IMR-90 (cell line): ENCODE measurements at regions of chr2 and their contacts with region 1.

Region 1: DNA sequence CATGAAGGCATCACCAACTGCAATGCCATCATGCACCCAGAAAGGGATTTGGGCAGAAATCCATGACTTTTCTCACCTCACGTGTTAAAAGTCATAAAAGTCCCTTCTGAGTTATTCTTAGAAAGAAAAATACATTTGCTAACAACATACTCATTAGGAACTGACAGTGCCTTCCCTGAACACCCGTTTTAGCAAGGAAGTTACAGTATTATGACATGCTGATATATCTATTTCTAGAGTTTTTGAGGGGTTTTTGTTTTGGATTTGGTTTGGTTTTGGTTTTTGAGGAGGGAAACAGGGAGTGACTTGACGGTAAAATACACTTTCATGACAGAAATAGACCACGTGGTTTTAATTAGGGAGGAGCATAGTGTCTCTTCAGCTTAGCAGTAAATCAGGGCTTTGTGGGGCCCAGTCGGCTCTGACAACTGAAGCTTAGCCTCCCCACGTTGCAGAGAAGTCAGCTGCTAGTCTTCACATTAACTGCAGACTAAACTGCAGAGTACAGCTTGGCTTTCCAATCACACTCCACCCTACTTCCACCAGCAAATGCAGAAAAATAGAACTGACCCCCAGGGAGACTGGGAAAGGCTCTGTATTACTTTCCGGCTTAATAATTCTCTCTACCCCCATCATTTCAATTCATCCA is 141.4 kb downstream of the FAM124B start:
- DNase-seq: no peak
- ATAC-seq: no peak
- H3K4me3 ChIP-seq: no peak overlapping the region
- H3K27ac ChIP-seq: no peak overlapping the region
- H3K4me1 ChIP-seq: no peaks in the 10 kb centered on the region
- H3K27me3 ChIP-seq: no peaks in the 10 kb centered on the region; the same call in 1 of the 2 replicates
- CTCF ChIP-seq: no peak
- POLR2A ChIP-seq: no peak
- RAD21 ChIP-seq: no peak

Region 2: DNA sequence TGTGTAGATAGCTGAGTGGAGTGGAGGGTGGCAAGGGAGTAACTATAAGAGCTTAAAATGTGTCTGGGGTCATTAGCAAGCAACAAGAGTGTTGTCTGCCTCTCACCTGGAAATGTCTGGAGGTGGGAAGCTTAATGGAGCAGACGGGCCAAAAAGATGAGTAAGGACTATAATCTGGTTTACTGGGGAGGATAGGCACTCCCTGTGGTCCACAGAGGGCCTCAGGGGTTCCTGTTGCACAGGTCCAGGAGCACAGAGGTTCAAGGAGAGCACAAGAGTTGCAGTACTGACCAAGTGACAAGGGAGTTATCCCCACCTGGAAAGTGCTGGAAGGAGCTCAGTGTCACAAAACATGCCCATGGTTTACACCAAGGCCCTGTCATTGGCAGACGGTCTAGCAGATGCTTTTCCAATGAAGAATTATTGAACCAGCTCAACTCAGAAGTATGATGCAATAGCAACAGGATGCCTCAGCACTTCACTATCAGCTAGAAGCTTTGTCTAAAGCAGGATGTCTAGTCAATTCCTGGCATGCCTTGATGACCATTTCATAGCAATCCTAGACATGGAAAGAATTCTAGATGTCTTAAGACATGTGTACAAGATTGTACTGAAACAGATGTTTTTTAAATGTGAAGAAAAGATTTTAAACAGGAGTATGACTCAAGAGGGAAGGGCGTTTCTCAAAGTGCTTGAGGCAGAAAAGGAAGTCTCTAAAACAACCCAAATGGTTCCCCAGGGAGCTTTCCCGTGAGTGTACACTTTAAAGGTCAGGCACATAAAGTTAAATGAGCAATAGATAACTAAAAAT is 158.5 kb before region 1 on chr2:
- CTCF ChIA-PET with region 1: no interaction called
- POLR2A ChIA-PET with region 1: no interaction called
- dilution Hi-C with region 1: no loop called
- in situ Hi-C with region 1: no loop called
- intact Hi-C with region 1: loop called (anchors 5 kb)
- DNase-seq: peak; percentile 98
- ATAC-seq: peak; percentile 86
- H3K4me3 ChIP-seq: no peak overlapping the region
- H3K27ac ChIP-seq: peak overlapping the region; percentile 96
- H3K4me1 ChIP-seq: peaks cover 13% of the 10 kb centered on the region
- H3K27me3 ChIP-seq: no peaks in the 10 kb centered on the region; the same call in 1 of the 2 replicates
- CTCF ChIP-seq: no peak
- POLR2A ChIP-seq: no peak
- RAD21 ChIP-seq: no peak

Region 3: DNA sequence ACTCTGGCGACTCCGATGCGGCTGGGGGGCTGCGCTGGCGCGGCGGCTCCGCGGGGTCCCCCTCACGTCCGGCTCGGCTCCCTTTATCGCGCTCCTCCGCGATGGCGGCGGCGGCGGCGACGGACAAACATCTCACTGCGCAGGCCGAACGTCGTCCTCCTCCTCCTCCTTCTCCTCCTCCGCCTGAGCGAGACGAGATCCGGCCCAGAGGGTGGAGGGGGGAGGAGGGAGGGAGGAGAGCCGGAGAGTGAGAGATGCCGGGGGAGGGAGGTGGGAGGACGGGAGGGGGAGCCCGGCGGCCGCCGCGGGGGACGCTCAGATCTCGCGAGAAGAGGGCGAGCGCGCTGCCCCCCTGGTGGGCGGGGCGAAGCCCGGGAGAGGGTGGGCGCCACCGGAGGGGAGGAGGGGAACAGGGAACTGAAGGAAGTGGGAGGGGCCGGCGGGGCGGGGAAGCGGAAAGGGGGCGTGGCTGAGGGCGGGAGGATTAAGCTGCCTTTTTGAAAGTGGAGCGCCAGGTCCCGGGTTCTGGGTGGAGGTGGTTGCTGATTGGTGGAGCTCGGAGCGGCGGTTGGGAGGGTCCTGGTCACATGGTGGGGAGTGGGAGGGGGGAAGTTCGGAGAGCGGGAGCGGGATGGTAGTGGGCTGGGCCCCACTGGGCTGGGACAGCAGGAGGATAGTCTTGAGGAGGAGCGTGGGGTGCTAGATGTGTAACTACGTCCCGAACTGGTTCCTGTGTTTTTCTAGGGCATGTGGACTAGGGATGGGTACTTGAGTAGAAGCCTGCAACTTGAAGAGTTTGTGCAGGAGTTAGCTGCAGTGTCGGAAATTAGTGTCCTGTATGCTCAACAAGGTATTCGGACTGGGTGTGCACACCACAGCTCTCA is 325.0 kb after region 1 on chr2 and contains the start of gene CUL3:
- CTCF ChIA-PET with region 1: no interaction called
- POLR2A ChIA-PET with region 1: no interaction called
- dilution Hi-C with region 1: no loop called
- in situ Hi-C with region 1: no loop called
- intact Hi-C with region 1: no loop called
- DNase-seq: peak; percentile 96
- ATAC-seq: peak; percentile 95
- H3K4me3 ChIP-seq: peak within 1 kb of the TSS; percentile 72
- H3K27ac ChIP-seq: peak within 1 kb of the TSS; percentile 90
- H3K4me1 ChIP-seq: 0 out of 2 replicates have a peak, but pooled peaks cover 2% of the 10 kb centered on the region
- H3K27me3 ChIP-seq: no peaks in the 10 kb centered on the region
- CTCF ChIP-seq: no peak
- POLR2A ChIP-seq: peak; percentile 90
- RAD21 ChIP-seq: no peak
- total RNA-seq, gene CUL3: 45.7 and 78.3 TPM in 2 replicates